ENCODE measurements at regions of chr1 and their contacts with region 1.

Region 1: DNA sequence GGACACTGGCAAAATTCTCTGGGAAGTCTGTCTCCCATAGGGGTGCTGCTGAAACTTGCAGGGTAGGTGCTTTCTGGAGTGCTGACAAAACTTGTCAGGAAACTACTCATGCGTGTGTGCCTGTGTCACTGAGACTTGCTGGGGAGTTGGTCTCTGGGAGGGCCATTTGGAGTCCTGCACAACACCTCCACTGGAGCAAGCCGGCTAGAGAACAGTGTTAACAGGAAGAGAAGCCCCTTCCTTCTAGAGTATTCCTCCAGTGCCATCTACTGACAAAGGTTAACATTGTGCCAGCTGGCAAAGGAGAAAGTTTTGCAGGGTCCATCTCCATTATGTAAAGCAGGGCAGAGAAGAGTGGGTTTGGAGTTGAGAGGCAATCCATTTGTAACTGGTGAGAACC is 30.0 kb downstream of the ZMYM4 start:
- DNase-seq: peak; percentile 20
- ATAC-seq: peak; percentile 79
- H3K4me3 ChIP-seq: no peak overlapping the region
- H3K27ac ChIP-seq: no peak overlapping the region
- H3K4me1 ChIP-seq: no peaks in the 10 kb centered on the region
- H3K27me3 ChIP-seq: no peaks in the 10 kb centered on the region
- CTCF ChIP-seq: peak; percentile 64

Region 2: DNA sequence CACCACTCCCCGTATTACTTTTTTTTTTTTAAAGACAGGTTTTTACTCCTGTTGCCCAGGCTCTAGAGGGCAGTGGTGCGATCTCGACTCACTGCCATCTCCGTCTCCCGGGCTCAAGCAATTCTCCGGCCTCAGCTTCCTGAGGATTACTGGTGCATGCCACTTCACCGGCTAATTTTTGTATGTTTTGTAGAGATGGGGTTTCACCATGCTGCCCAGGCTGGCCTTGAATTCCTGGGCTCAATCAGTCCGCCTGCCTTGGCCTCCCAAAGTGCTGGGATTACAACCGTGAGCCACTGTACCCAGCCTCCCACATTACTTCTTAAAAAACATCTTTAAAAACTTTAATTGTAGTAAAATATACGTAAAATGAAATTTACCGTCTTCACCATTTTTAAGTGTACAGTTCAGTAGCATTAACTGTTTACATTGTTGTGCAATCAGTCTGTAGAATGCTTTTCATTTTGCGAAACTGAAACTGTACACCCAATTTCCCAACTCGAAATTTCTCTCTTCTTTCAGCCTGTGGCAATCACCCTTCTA is 47.0 kb after region 1 on chr1:
- CTCF ChIA-PET with region 1: interaction called, 11 read pairs
- POLR2A ChIA-PET with region 1: no interaction called
- in situ Hi-C with region 1: no loop called
- intact Hi-C with region 1: no loop called
- DNase-seq: no peak
- ATAC-seq: no peak
- H3K4me3 ChIP-seq: no peak overlapping the region
- H3K27ac ChIP-seq: no peak overlapping the region
- H3K4me1 ChIP-seq: no peaks in the 10 kb centered on the region
- H3K27me3 ChIP-seq: no peaks in the 10 kb centered on the region
- CTCF ChIP-seq: no peak

Region 3: GRCh38 chr1:35707601-35708440 is 409.4 kb after region 1 on chr1:
- CTCF ChIA-PET with region 1: no interaction called
- POLR2A ChIA-PET with region 1: no interaction called
- in situ Hi-C with region 1: no loop called
- intact Hi-C with region 1: no loop called
- DNase-seq: no peak
- ATAC-seq: peak; percentile 55
- H3K4me3 ChIP-seq: peak overlapping the region; percentile 40 to 45
- H3K27ac ChIP-seq: no peak overlapping the region
- H3K4me1 ChIP-seq: no peaks in the 10 kb centered on the region
- H3K27me3 ChIP-seq: no peaks in the 10 kb centered on the region
- CTCF ChIP-seq: no peak